MCF 10A (cell line): ENCODE measurements at regions of chr6 and their contacts with region 1.

Region 1: DNA sequence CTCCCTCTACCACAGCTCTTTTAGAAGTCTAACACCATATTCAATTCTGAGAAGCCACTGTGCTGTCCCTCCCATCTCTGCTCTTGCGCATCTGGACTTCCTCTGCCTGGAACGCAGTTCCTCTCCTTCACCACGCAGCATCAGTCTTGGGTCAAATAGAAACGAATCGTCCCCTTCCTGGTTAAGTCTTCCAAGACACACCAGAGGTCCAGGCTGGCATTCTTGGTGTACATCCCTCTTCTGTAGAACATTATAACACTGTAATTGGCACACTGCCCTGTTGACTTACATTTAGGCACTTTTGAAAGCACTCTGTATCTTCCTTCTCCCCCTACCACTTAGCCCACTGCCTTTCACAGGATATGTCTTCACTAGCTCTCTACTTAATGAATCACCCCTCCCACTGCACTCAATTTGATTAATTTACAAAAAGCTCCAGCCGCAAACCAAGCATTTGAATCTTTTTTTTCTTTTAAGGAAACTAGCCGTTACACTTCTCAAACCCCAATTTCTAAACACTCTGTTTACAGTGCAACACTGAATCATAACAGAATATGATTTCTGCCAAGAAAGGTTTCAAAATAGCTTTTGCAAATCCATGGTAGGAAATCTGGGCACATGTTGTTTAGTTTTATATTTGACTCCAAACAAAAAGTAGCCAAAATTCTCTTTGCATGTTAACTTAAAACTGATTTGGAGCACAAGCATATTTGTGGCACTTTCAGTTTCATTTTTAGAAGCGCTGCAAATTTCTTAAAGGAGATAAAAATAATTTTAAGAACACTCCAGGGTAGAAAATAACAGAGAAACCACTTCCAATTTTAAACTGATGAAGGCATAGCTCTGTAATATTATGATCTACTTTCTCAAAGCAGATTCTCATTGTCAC is 140.7 kb upstream of the CARMIL1 start:
- DNase-seq: peak; percentile 84
- H3K4me3 Mint-ChIP-seq: peak overlapping the region; percentile 79
- H3K27ac Mint-ChIP-seq: peak overlapping the region; percentile 92
- H3K4me1 Mint-ChIP-seq: peaks cover 26% of the 10 kb centered on the region
- H3K27me3 Mint-ChIP-seq: no peaks in the 10 kb centered on the region
- CTCF ChIP-seq: peak; percentile 17

Region 2: GRCh38 chr6:25112207-25112874 is 26.1 kb before region 1 on chr6:
- CTCF ChIA-PET with region 1: no interaction called
- POLR2A ChIA-PET with region 1: interaction called, 11 read pairs
- intact Hi-C with region 1: no loop called
- DNase-seq: peak; percentile 53
- H3K4me3 Mint-ChIP-seq: no peak overlapping the region
- H3K27ac Mint-ChIP-seq: peak overlapping the region; percentile 66
- H3K4me1 Mint-ChIP-seq: no peaks in the 10 kb centered on the region
- H3K27me3 Mint-ChIP-seq: no peaks in the 10 kb centered on the region
- CTCF ChIP-seq: no peak

Region 3: GRCh38 chr6:25173951-25174474 is 35.5 kb after region 1 on chr6:
- CTCF ChIA-PET with region 1: interaction called, 3 read pairs
- POLR2A ChIA-PET with region 1: interaction called, 17 read pairs
- intact Hi-C with region 1: loop called (anchors 5 kb)
- DNase-seq: peak; percentile 93
- H3K4me3 Mint-ChIP-seq: no peak overlapping the region
- H3K27ac Mint-ChIP-seq: peak overlapping the region; percentile 41
- H3K4me1 Mint-ChIP-seq: peaks cover 53% of the 10 kb centered on the region
- H3K27me3 Mint-ChIP-seq: no peaks in the 10 kb centered on the region
- CTCF ChIP-seq: no peak

Region 4: GRCh38 chr6:25193460-25194171 is 55.1 kb after region 1 on chr6:
- CTCF ChIA-PET with region 1: interaction called, 8 read pairs
- POLR2A ChIA-PET with region 1: interaction called, 31 read pairs
- intact Hi-C with region 1: no loop called
- DNase-seq: peak; percentile 97
- H3K4me3 Mint-ChIP-seq: peak overlapping the region; percentile 56
- H3K27ac Mint-ChIP-seq: peak overlapping the region; percentile 66
- H3K4me1 Mint-ChIP-seq: peaks cover 25% of the 10 kb centered on the region
- H3K27me3 Mint-ChIP-seq: no peaks in the 10 kb centered on the region
- CTCF ChIP-seq: no peak

Region 5: GRCh38 chr6:25359191-25359861 is 220.8 kb after region 1 on chr6:
- CTCF ChIA-PET with region 1: no interaction called
- POLR2A ChIA-PET with region 1: no interaction called
- intact Hi-C with region 1: no loop called
- DNase-seq: peak; percentile 81
- H3K4me3 Mint-ChIP-seq: peak overlapping the region; percentile 56
- H3K27ac Mint-ChIP-seq: peak overlapping the region; percentile 80
- H3K4me1 Mint-ChIP-seq: peaks cover 26% of the 10 kb centered on the region
- H3K27me3 Mint-ChIP-seq: no peaks in the 10 kb centered on the region
- CTCF ChIP-seq: no peak

Region 6: DNA sequence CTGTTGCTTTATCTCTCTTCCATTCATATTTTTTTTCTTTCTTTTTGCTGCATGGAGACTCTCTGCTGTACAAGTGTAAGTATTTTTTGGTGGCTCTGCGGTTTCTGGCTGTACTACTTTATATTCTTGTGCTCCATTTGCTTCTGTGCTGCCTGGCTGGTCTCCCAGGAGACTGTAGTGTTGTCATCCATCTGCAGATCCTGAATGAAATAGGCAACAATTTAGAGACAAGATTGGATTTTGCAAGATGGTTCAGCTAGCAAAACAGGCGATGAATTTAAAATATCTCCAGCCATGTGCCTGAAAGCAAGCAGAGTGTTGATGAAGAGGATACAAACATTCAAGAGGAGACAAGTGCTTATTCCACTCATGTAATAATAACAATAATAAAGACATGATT is 438.4 kb after region 1 on chr6:
- CTCF ChIA-PET with region 1: no interaction called
- POLR2A ChIA-PET with region 1: no interaction called
- intact Hi-C with region 1: no loop called
- DNase-seq: no peak
- H3K4me3 Mint-ChIP-seq: no peak overlapping the region
- H3K27ac Mint-ChIP-seq: no peak overlapping the region
- H3K4me1 Mint-ChIP-seq: no peaks in the 10 kb centered on the region
- H3K27me3 Mint-ChIP-seq: no peaks in the 10 kb centered on the region
- CTCF ChIP-seq: no peak

Region 7: GRCh38 chr6:27002447-27002846 is 1864.0 kb after region 1 on chr6:
- CTCF ChIA-PET with region 1: no interaction called
- POLR2A ChIA-PET with region 1: no interaction called
- intact Hi-C with region 1: no loop called
- DNase-seq: no peak
- H3K4me3 Mint-ChIP-seq: no peak overlapping the region
- H3K27ac Mint-ChIP-seq: no peak overlapping the region
- H3K4me1 Mint-ChIP-seq: no peaks in the 10 kb centered on the region
- H3K27me3 Mint-ChIP-seq: no peaks in the 10 kb centered on the region
- CTCF ChIP-seq: no peak